H1 (cell line): ENCODE measurements at regions of chr17 and their contacts with region 1.

Region 1: GRCh38 chr17:17800504-17801021 is 36.2 kb downstream of the SREBF1 start:
- DNase-seq: no peak
- H3K4me3 ChIP-seq: no peak overlapping the region
- H3K27ac ChIP-seq: no peak overlapping the region
- H3K4me1 ChIP-seq: peaks cover 0 to 9% (median 0%) of the 10 kb centered on the region in 4 experiments; a peak in 3 of 7 replicates
- H3K27me3 ChIP-seq: no peaks in the 10 kb centered on the region
- CTCF ChIP-seq: peak; percentile 9 to 25 (median 23)
- EP300 ChIP-seq: no peak
- POLR2A ChIP-seq: no peak
- RAD21 ChIP-seq: peak; percentile 24 to 49; a peak in 3 of 4 replicates

Region 2: GRCh38 chr17:17818088-17818526 is 17.5 kb after region 1 on chr17:
- CTCF ChIA-PET with region 1: interaction called, 36 read pairs
- POLR2A ChIA-PET with region 1: interaction called, 4 read pairs
- DNase-seq: no peak
- H3K4me3 ChIP-seq: no peak overlapping the region
- H3K27ac ChIP-seq: no peak overlapping the region
- H3K4me1 ChIP-seq: peaks cover 0 to 19% (median 11%) of the 10 kb centered on the region in 4 experiments; a peak in 6 of 7 replicates
- H3K27me3 ChIP-seq: no peaks in the 10 kb centered on the region; a peak in 1 of 7 replicates
- CTCF ChIP-seq: no peak
- EP300 ChIP-seq: no peak
- POLR2A ChIP-seq: no peak; a peak in 1 of 3 replicates
- RAD21 ChIP-seq: no peak

Region 3: GRCh38 chr17:17877529-17878358 is 77.2 kb after region 1 on chr17:
- CTCF ChIA-PET with region 1: no interaction called
- POLR2A ChIA-PET with region 1: no interaction called
- DNase-seq: no peak
- H3K4me3 ChIP-seq: no peak overlapping the region
- H3K27ac ChIP-seq: no peak overlapping the region
- H3K4me1 ChIP-seq: peaks cover 11 to 28% (median 18%) of the 10 kb centered on the region in 4 experiments
- H3K27me3 ChIP-seq: no peaks in the 10 kb centered on the region; a peak in 1 of 7 replicates
- CTCF ChIP-seq: 0 out of 4 replicates have a peak, but pooled peaks of 1 of the 3 experiments have one; percentile 6
- EP300 ChIP-seq: no peak
- POLR2A ChIP-seq: no peak
- RAD21 ChIP-seq: no peak